Lower leg skin (tissue), 4 donors: ENCODE measurements at regions of chr7 and their contacts with region 1.

Region 1: GRCh38 chr7:31828520-31828919 is 141.5 kb downstream of the PPP1R17 start:
- DNase-seq: no peak
- H3K4me3 ChIP-seq: no peak overlapping the region
- CTCF ChIP-seq: no peak
- POLR2A ChIP-seq: no peak

Region 2: GRCh38 chr7:31796375-31796774 is 32.1 kb before region 1 on chr7:
- intact Hi-C with region 1: loop called (anchors 2 kb)
- DNase-seq: no peak
- H3K4me3 ChIP-seq: no peak overlapping the region
- CTCF ChIP-seq: no peak
- POLR2A ChIP-seq: no peak

Region 3: GRCh38 chr7:32001948-32002347 is 173.4 kb after region 1 on chr7:
- intact Hi-C with region 1: no loop called
- DNase-seq: no peak
- H3K4me3 ChIP-seq: no peak overlapping the region
- CTCF ChIP-seq: no peak
- POLR2A ChIP-seq: no peak